Right ventricle myocardium superior (tissue), 1 donor: ENCODE measurements at regions of chr7 and their contacts with region 1.

Region 1: GRCh38 chr7:105149827-105150226 is 135.8 kb downstream of the KMT2E start:
- DNase-seq: no peak
- ATAC-seq: no peak

Region 2: GRCh38 chr7:105187302-105188169 is 37.7 kb after region 1 on chr7:
- intact Hi-C with region 1: no loop called
- DNase-seq: no peak
- ATAC-seq: no peak

Region 3: GRCh38 chr7:105330526-105330925 is 180.7 kb after region 1 on chr7:
- intact Hi-C with region 1: loop called (anchors 5 kb)
- DNase-seq: no peak
- ATAC-seq: no peak

Region 4: GRCh38 chr7:105429746-105430612 is 280.2 kb after region 1 on chr7:
- intact Hi-C with region 1: loop called (anchors 5 kb)
- DNase-seq: no peak
- ATAC-seq: peak; percentile 55